PC-9 (cell line): ENCODE measurements at regions of chr2 and their contacts with region 1.

Region 1: DNA sequence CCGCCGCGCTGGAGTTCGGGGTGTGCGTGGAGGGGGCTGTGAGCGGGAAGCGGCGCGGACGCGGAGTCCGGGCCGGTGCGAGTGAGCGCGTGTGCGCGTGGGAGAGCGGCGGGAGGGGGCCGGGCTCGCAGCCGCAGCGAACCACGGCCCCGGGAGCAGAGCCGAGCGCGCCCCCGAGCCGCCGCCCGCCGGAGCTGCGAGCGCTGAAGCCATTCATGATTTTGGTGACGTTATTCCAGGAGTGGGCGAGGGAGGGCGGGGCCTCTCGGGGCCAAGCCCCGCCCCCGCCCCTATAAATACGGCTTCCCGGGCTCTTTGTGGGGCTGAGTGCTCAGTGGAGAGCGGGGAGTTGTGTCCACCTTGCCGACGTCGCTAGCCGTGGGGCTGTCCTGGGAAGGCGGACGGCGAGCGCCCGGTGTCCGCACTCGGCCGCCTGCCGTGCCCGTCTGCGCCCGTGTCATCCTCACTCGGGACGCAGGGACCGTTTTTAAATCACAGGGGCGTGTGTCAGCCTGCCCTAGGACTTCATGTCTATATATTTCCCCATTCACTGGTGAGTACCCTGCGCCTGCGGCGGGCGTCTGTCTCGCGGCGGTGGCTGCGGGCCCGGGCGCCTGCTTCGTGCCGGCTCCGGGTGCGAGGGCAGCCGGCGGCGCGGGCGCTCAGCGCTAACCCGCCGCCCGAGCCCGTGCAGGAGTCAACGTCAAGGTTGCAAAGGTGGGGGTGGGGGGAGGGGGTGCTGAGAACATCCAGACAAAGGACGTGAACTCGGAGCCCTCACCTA is at the start of gene LBH:
- DNase-seq: peak in 1 of 2 experiments; percentile 34
- H3K4me3 ChIP-seq: no peak within 1 kb of the TSS
- H3K27ac ChIP-seq: no peak within 1 kb of the TSS
- H3K4me1 ChIP-seq: peaks cover 18% of the 10 kb centered on the region
- H3K27me3 ChIP-seq: 0 out of 2 replicates have a peak, but pooled peaks cover 11% of the 10 kb centered on the region
- CTCF ChIP-seq: no peak
- total RNA-seq, gene LBH: 30.6 and 34.4 TPM in 2 replicates

Region 2: DNA sequence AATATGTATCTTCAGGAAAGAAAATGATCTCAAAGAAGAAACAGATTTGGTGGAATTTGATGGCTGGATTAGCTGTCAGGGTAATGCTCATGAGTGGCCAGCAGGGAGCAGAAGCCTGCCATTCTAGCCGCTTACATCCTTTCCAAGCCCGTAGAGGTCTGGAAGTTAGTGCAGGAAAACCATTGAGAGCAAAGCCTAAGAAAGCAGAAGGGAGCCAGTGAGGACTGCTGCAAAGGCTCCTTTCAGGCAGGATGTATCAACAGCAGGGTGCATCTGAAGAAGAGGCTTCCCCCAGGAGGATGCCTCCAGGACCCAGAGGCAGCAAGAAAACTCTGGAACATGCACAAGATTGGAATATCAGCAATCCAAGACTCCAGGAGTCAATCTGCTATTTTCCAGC is 23.0 kb before region 1 on chr2:
- CTCF ChIA-PET with region 1: interaction called, 17 read pairs
- POLR2A ChIA-PET with region 1: no interaction called
- intact Hi-C with region 1: no loop called
- DNase-seq: peak; percentile 56 to 59
- H3K4me3 ChIP-seq: no peak overlapping the region
- H3K27ac ChIP-seq: no peak overlapping the region
- H3K4me1 ChIP-seq: no peaks in the 10 kb centered on the region
- H3K27me3 ChIP-seq: no peaks in the 10 kb centered on the region
- CTCF ChIP-seq: peak; percentile 97

Region 3: DNA sequence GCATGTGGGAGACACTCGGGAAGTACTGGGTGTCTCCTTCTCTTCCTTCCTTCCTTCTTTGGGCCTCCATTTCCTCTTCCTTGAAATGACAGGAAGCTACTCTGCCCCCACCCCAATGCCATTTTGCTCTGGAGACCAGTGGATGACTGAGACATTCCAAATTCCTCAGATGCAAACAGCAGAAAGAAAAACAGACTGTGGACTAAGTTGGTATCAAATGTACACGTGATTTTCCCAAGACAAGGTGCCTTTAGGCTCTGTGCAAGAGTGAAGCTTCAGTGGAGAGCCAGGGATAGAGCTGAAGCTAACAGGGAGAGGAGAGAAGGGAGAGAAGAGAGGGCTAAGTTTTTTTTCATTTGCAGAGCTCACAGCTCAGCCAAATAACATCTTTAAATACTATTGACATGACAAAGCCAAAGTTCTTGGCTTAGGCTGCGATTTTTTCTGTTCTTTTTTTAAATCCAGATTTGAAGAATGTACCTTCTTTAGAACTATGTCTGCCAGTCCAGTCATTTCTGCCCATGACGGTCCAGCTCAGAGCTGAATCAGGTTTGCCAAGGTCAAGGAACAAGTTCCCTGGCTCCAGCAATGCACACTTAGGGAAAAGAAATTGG is 131.2 kb after region 1 on chr2:
- CTCF ChIA-PET with region 1: no interaction called
- POLR2A ChIA-PET with region 1: interaction called, 7 read pairs
- intact Hi-C with region 1: loop called (anchors 2 kb)
- DNase-seq: peak; percentile 45 to 91
- H3K4me3 ChIP-seq: no peak overlapping the region
- H3K27ac ChIP-seq: peak overlapping the region; percentile 73
- H3K4me1 ChIP-seq: peaks cover 35% of the 10 kb centered on the region
- H3K27me3 ChIP-seq: no peaks in the 10 kb centered on the region
- CTCF ChIP-seq: no peak

Region 4: GRCh38 chr2:30410217-30410616 is 178.8 kb after region 1 on chr2:
- CTCF ChIA-PET with region 1: no interaction called
- POLR2A ChIA-PET with region 1: no interaction called
- intact Hi-C with region 1: loop called (anchors 5 kb)
- DNase-seq: peak; percentile 18 to 84
- H3K4me3 ChIP-seq: no peak overlapping the region
- H3K27ac ChIP-seq: peak overlapping the region; percentile 66
- H3K4me1 ChIP-seq: peaks cover 17% of the 10 kb centered on the region
- H3K27me3 ChIP-seq: no peaks in the 10 kb centered on the region
- CTCF ChIP-seq: no peak

Region 5: GRCh38 chr2:30447149-30448045 is 216.0 kb after region 1 on chr2 and contains the start of gene LCLAT1:
- CTCF ChIA-PET with region 1: no interaction called
- POLR2A ChIA-PET with region 1: no interaction called
- intact Hi-C with region 1: loop called (anchors 1 kb)
- DNase-seq: peak; percentile 56 to 74
- H3K4me3 ChIP-seq: peak within 1 kb of the TSS; percentile 89
- H3K27ac ChIP-seq: peak within 1 kb of the TSS; percentile 53
- H3K4me1 ChIP-seq: peaks cover 23% of the 10 kb centered on the region
- H3K27me3 ChIP-seq: no peaks in the 10 kb centered on the region
- CTCF ChIP-seq: no peak
- total RNA-seq, gene LCLAT1: 21.9 and 35.7 TPM in 2 replicates

Region 6: GRCh38 chr2:32182667-32183066 is 1951.3 kb after region 1 on chr2:
- CTCF ChIA-PET with region 1: interaction called, 14 read pairs
- POLR2A ChIA-PET with region 1: no interaction called
- intact Hi-C with region 1: no loop called
- DNase-seq: no peak
- H3K4me3 ChIP-seq: no peak overlapping the region
- H3K27ac ChIP-seq: no peak overlapping the region
- H3K4me1 ChIP-seq: no peaks in the 10 kb centered on the region
- H3K27me3 ChIP-seq: no peaks in the 10 kb centered on the region
- CTCF ChIP-seq: no peak